Activated T-helper 1 cell treated with anti-CD3 and anti-CD28 coated beads, Interleukin-12 subunit alpha, Interleukin-12 subunit beta, Interleukin-2, Interleukin-4 antibody, amounts not matched to agents 30 ng/mL and 10 ng/mL and 1 ng/mL, durations not matched to agents 14 hours and 24 hours and 36 hours (primary cell): ENCODE measurements at regions of chr1 and their contacts with region 1.

Region 1: DNA sequence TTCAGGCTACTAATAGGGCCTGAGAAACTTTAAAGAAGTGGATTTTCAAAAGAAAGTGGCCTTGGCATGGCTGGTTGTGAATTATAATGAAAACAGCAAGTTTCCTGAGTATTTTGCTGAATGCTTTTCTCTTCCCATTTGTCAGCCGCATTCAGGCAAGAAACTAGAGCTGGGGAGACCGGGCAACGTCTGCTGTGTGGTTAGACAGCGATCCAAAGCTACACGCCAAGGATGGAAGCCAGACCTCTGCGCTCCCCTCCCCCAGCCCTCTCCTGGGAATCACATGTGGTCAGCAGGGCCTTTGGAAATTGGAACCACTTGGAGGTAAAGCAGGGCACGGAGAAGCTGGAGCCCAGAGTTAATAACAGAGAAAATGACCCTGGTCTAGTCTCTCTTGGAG is 114.1 kb upstream of the CD34 start:
- DNase-seq: no peak
- H3K4me3 Mint-ChIP-seq: no peak overlapping the region
- H3K27ac Mint-ChIP-seq: no peak overlapping the region
- H3K4me1 Mint-ChIP-seq: no peaks in the 10 kb centered on the region
- H3K27me3 Mint-ChIP-seq: peaks cover 5% of the 10 kb centered on the region

Region 2: GRCh38 chr1:208036109-208036808 is 11.2 kb after region 1 on chr1:
- intact Hi-C with region 1: loop called (anchors 1 kb)
- DNase-seq: no peak
- H3K4me3 Mint-ChIP-seq: no peak overlapping the region
- H3K27ac Mint-ChIP-seq: no peak overlapping the region
- H3K4me1 Mint-ChIP-seq: no peaks in the 10 kb centered on the region
- H3K27me3 Mint-ChIP-seq: peaks cover 9% of the 10 kb centered on the region

Region 3: GRCh38 chr1:208093754-208094719 is 69.0 kb after region 1 on chr1:
- intact Hi-C with region 1: loop called (anchors 1 kb)
- DNase-seq: peak; percentile 43
- H3K4me3 Mint-ChIP-seq: no peak overlapping the region
- H3K27ac Mint-ChIP-seq: no peak overlapping the region
- H3K4me1 Mint-ChIP-seq: no peaks in the 10 kb centered on the region
- H3K27me3 Mint-ChIP-seq: peaks cover 14% of the 10 kb centered on the region

Region 4: DNA sequence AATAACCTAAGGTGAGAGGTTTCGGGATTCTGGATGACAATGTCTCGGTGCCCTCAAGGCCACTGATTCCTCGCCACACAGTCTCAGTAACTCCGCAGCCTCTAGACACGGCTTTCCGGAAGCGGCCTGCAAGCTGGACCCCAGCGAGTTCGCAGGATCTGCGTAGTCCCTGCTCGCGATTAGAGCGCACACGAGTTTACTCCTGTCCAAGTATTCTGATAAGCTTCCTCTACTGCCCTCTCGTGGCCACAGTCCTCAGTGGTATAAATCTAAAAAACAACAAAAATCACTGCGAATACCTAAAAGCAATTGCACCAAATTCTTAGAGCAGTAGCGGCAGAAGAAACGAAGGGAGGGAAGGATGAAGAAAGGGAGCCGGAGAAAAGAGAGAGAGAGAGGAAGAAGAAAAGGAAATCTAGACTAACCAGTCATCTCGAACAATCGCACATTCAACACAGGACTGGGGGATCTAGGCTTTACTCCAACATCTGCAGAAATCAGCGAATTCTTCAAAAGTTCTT is 220.2 kb after region 1 on chr1:
- intact Hi-C with region 1: loop called (anchors 1 kb)
- DNase-seq: peak; percentile 61
- H3K4me3 Mint-ChIP-seq: peak overlapping the region; percentile 65
- H3K27ac Mint-ChIP-seq: no peak overlapping the region
- H3K4me1 Mint-ChIP-seq: peaks cover 12% of the 10 kb centered on the region
- H3K27me3 Mint-ChIP-seq: peaks cover 51% of the 10 kb centered on the region